SK-N-SH (cell line): ENCODE measurements at regions of chr7 and their contacts with region 1.

Region 1: DNA sequence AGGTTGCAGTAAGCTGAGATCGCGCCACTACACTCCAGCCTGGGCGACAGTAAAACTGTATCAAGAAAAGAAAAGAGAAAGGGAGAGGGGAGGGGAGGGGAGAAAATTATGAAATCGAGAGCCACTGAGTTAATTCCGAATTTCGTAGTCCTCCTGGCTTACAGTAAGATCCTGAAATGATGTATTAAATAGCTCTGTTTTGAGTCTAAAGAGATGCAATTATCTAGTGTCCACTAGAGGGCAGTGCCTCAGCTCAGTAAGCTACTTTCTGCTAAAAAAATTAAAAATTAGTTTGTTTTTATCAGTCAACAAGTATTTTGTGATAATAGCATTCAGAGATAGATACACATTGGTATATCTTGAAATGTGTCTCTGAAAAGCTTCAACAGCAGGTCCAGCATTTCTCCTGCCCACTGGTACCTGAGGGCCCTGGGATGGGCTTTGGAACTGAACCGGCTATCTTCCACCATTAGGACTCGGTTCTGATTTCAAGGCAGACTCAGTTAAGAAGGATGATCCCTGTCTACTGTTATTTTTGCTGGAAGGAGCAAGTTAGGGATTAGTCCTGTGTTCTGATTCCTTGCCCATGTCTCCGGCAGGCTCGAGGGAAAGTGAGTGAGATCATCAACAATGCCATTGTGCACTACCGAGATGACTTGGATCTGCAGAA is 19.5 kb downstream of the TSPAN33 start:
- DNase-seq: peak; percentile 76
- H3K4me3 ChIP-seq: no peak overlapping the region; a peak in 1 of 4 replicates
- H3K27ac ChIP-seq: no peak overlapping the region
- H3K4me1 ChIP-seq: peaks cover 0 to 10% of the 10 kb centered on the region in 2 experiments; a peak in 1 of 4 replicates
- H3K27me3 ChIP-seq: no peaks in the 10 kb centered on the region
- CTCF ChIP-seq: peak; percentile 100
- EP300 ChIP-seq: no peak
- RAD21 ChIP-seq: peak; percentile 79

Region 2: DNA sequence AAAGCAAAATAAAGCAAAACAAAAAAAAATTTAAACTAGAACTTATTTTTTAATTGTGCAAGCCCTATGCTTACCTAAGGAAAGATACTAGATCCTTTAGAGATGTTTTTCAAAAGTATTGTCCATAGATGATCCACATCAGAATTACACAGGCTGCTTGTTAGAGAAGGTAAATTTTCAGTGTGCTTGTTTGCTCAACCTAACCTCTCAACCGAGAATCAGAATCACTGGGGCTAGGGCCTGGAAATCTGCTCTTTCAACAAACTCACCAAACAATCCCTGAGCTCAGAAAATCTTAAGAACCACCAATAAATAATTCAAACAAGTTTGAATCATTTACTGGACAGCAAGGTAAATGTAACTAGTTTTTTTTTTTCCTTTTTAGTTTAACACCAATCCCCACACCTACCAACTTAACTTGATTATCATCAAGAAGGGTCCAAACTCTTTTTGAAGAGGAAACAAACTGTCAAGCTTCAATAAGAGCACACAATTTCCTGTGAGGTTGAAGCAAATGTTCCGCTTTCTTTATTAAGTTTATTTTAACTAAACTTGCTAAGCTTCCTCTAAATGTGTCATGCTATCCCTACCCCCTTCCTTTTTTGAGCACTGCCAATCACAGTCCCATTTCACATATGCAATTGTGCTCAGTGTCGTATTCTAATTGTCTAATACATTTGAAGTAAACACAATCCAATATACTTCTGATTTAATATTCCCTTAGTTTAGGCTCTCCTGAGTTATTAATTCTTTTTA is 26.9 kb before region 1 on chr7:
- CTCF ChIA-PET with region 1: interaction called, 11 read pairs
- POLR2A ChIA-PET with region 1: no interaction called
- DNase-seq: no peak
- H3K4me3 ChIP-seq: no peak overlapping the region
- H3K27ac ChIP-seq: no peak overlapping the region
- H3K4me1 ChIP-seq: no peaks in the 10 kb centered on the region
- H3K27me3 ChIP-seq: peaks cover 18% of the 10 kb centered on the region
- CTCF ChIP-seq: no peak
- EP300 ChIP-seq: no peak
- RAD21 ChIP-seq: no peak

Region 3: DNA sequence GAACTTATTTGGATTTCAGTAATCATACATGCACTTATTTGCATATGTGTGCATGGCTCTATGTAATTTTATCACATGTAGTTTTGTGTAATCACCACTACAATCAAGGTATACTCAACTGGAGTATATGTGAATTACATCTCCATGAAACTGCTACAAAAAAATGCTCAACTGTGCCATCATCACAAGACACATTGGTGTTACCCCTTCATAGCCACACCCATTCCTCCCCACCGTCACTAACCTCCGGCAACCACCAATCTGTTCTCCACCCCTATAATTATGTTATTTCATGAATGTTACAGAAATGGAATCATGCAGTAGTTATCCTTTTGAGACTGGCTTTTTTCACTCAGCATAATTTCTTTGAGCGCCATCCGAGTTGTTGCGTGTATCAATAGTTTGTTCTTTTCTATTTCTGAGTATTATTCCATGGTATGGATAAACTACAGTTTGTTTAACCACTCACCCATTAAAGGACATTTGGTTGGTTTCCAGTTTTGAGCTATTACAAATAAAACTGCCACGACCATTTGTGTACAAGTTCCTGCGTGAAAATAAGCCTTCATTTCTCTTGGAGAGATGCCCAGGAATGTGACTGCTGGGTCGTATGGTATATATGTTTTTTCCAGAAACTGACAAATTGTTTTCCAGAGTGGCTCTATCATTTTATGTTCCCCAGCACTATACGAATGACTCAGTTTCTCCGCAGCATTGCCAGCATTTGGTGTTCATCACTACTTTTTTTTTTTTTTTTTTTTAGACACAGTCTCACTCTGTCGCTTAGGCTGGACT is 13.1 kb after region 1 on chr7:
- CTCF ChIA-PET with region 1: interaction called, 28 read pairs
- POLR2A ChIA-PET with region 1: no interaction called
- DNase-seq: no peak
- H3K4me3 ChIP-seq: no peak overlapping the region
- H3K27ac ChIP-seq: no peak overlapping the region
- H3K4me1 ChIP-seq: no peaks in the 10 kb centered on the region
- H3K27me3 ChIP-seq: no peaks in the 10 kb centered on the region
- CTCF ChIP-seq: no peak
- EP300 ChIP-seq: no peak
- RAD21 ChIP-seq: no peak

Region 4: GRCh38 chr7:129193892-129194291 is 29.9 kb after region 1 on chr7:
- CTCF ChIA-PET with region 1: interaction called, 45 read pairs
- POLR2A ChIA-PET with region 1: no interaction called
- DNase-seq: no peak
- H3K4me3 ChIP-seq: no peak overlapping the region
- H3K27ac ChIP-seq: no peak overlapping the region
- H3K4me1 ChIP-seq: peaks cover 0 to 15% of the 10 kb centered on the region in 2 experiments; a peak in 2 of 4 replicates
- H3K27me3 ChIP-seq: no peaks in the 10 kb centered on the region
- CTCF ChIP-seq: no peak
- EP300 ChIP-seq: no peak
- RAD21 ChIP-seq: no peak

Region 5: DNA sequence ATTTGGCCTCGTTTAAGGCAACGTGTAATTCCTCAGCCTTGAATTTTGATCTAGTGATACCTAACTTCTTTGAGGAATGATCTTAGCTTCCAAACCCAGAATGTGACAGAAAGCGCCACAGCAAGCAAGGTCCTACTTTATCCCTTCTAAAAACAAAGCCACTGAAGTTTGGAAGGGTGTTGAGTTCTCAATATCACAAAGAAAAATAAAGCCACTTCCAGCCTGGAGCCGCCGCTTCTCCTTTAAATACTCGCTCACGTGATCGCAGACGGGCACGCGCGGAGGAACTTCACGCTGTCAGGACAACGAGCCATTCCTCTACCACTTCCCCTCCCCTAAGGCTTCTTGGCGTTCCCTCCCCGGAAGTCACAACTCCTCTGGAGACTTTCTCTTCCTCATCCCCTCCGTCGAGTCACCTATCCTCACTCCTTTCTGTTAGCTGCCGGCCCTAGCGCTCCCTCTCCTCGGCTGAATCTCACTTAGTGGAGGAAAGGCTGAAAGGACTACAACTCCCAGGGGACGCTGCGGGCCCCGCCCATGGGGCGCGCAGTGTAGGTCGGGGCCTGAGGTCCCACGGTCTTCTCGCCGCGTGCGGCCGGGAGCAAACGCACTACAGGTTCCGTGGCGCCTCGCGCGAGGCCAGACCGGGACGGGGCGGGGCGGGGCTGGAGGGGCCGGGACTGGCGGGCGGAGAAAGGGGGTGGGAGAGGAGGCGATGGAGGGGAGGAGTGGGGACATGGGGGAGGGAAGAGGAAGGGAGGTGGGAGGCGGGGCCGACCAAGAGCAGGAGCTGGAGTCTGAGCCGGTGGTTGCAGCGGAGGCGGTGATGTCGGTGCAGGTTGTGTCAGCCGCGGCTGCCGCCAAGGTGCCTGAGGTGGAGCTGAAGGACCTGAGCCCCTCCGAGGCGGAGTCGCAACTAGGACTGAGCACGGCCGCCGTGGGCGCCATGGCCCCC is 60.5 kb after region 1 on chr7 and contains the start of gene AHCYL2:
- CTCF ChIA-PET with region 1: interaction called, 58 read pairs
- POLR2A ChIA-PET with region 1: no interaction called
- DNase-seq: peak; percentile 99
- H3K4me3 ChIP-seq: peak within 1 kb of the TSS; percentile 68 to 76
- H3K27ac ChIP-seq: peak within 1 kb of the TSS; percentile 95
- H3K4me1 ChIP-seq: peaks cover 0 to 6% of the 10 kb centered on the region in 2 experiments; a peak in 3 of 4 replicates
- H3K27me3 ChIP-seq: no peaks in the 10 kb centered on the region
- CTCF ChIP-seq: no peak
- EP300 ChIP-seq: no peak; a peak in 1 of 4 replicates
- RAD21 ChIP-seq: no peak
- polyA plus RNA-seq, gene AHCYL2: 20.4 and 29.9 TPM in 2 replicates